ENCODE measurements at regions of chr10 and their contacts with region 1.

Region 1: GRCh38 chr10:92432596-92432995 is 141.3 kb downstream of the IDE start:
- DNase-seq: no peak
- H3K4me3 ChIP-seq: no peak overlapping the region
- H3K27ac ChIP-seq: no peak overlapping the region
- H3K4me1 ChIP-seq: no peaks in the 10 kb centered on the region
- H3K27me3 ChIP-seq: no peaks in the 10 kb centered on the region
- CTCF ChIP-seq: no peak
- POLR2A ChIP-seq: no peak

Region 2: GRCh38 chr10:91910467-91910866 is 522.1 kb before region 1 on chr10:
- intact Hi-C with region 1: no loop called
- DNase-seq: no peak
- H3K4me3 ChIP-seq: no peak overlapping the region
- H3K27ac ChIP-seq: no peak overlapping the region
- H3K4me1 ChIP-seq: peaks cover 23% of the 10 kb centered on the region
- H3K27me3 ChIP-seq: no peaks in the 10 kb centered on the region
- CTCF ChIP-seq: no peak
- POLR2A ChIP-seq: no peak

Region 3: GRCh38 chr10:92087750-92088395 is 344.7 kb before region 1 on chr10:
- intact Hi-C with region 1: loop called (anchors 5 kb)
- DNase-seq: no peak
- H3K4me3 ChIP-seq: no peak overlapping the region
- H3K27ac ChIP-seq: no peak overlapping the region
- H3K4me1 ChIP-seq: no peaks in the 10 kb centered on the region
- H3K27me3 ChIP-seq: no peaks in the 10 kb centered on the region
- CTCF ChIP-seq: peak; percentile 56 to 68 (median 65)
- POLR2A ChIP-seq: no peak

Region 4: DNA sequence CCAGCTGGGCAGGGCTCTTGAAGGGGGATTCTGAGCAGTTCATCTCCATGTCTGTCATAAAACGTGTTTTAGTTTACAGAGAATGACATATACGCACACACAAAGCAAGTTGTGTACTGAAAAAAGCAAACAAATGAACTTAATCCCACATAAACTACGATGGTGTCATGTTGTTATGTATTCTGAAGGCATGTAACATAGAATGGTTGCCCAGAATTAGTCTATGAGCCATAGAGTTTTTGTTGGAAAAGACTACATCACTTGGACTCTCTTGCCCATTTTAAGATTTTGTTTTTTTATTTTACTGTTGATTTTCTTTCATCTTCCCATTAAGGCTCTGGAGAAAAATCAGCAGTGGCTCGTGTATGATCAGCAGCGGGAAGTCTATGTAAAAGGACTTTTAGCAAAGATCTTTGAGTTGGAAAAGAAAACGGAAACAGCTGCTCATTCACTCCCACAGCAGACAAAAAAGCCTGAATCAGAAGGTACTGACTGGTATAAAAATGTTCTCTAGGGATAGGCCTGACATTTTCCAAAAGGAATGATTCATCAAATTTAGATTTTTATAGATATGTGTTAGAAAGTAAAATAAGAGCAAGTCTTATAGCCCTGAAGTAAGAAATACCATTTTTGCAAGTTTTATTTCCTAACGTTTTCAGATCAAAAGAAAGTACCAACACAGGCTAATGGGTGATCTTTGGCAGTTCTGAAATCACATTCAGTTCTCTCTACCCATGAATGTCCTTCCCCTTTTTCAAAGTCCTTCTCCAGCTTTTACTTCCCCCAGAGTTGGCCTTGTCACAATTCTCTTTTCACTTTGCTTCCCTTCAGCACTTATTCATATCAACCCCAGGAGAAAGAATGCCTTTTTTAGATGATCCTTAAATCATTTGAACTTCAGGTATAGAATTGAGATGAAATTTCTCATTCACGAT is 1082.7 kb after region 1 on chr10:
- intact Hi-C with region 1: no loop called
- DNase-seq: no peak
- H3K4me3 ChIP-seq: no peak overlapping the region
- H3K27ac ChIP-seq: peak overlapping the region; percentile 49
- H3K4me1 ChIP-seq: peaks cover 5% of the 10 kb centered on the region
- H3K27me3 ChIP-seq: no peaks in the 10 kb centered on the region
- CTCF ChIP-seq: no peak
- POLR2A ChIP-seq: no peak

Measured in vagina (tissue), 2 donors.